PC-9 (cell line): ENCODE measurements at regions of chr13 and their contacts with region 1.

Region 1: GRCh38 chr13:102651892-102652291 is 43.0 kb downstream of the METTL21C start:
- DNase-seq: no peak
- H3K4me3 ChIP-seq: no peak overlapping the region
- H3K27ac ChIP-seq: peak overlapping the region; percentile 16; the same call in 1 of the 2 replicates
- H3K4me1 ChIP-seq: peaks cover 12% of the 10 kb centered on the region
- H3K27me3 ChIP-seq: no peaks in the 10 kb centered on the region
- CTCF ChIP-seq: no peak

Region 2: GRCh38 chr13:101626925-101627555 is 1024.9 kb before region 1 on chr13:
- CTCF ChIA-PET with region 1: no interaction called
- POLR2A ChIA-PET with region 1: no interaction called
- intact Hi-C with region 1: no loop called
- DNase-seq: no peak
- H3K4me3 ChIP-seq: no peak overlapping the region
- H3K27ac ChIP-seq: no peak overlapping the region
- H3K4me1 ChIP-seq: peaks cover 50% of the 10 kb centered on the region
- H3K27me3 ChIP-seq: no peaks in the 10 kb centered on the region
- CTCF ChIP-seq: no peak

Region 3: DNA sequence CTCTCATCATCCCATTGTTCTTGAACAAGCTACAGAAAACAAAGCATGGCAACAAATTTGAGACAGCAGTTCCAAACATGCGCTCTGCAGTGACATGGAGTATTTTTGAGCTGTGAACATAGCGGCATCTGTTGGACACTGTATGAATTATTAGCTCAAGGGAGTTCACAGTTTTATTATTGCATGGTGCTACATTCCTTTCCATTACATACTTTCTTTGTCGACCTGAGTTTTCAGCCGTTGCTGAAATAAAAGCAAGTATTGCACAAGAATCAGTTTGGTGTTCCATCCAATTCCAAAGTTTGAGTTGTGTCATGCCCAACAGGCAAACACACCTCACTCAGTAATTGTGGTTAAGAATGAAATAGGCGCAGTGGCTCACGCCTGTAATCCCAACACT is 73.0 kb after region 1 on chr13:
- CTCF ChIA-PET with region 1: interaction called, 5 read pairs
- POLR2A ChIA-PET with region 1: interaction called, 3 read pairs
- intact Hi-C with region 1: loop called (anchors 5 kb)
- DNase-seq: peak; percentile 12 to 87
- H3K4me3 ChIP-seq: no peak overlapping the region
- H3K27ac ChIP-seq: 0 out of 2 replicates have a peak overlapping the region, but pooled peaks have one; percentile 38
- H3K4me1 ChIP-seq: peaks cover 12% of the 10 kb centered on the region
- H3K27me3 ChIP-seq: no peaks in the 10 kb centered on the region
- CTCF ChIP-seq: peak; percentile 78

Region 4: DNA sequence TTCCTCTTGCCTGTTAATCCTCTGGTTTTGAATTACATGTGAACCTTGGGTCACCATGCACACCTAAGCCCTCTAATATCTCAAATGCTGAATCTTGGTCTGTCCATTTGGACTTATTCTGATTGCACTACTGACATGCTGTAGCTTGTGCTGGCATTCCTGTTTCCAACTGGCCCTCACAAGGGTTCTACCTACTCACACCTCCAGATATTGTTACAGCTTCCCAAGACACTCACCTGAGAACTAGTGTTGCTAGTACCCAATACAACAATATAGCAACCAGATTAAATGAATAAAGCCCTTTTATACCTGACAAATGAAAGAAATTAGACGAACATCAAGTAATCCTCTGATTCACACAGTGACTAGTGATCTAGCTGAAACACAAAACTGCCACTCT is 105.1 kb after region 1 on chr13:
- CTCF ChIA-PET with region 1: no interaction called
- POLR2A ChIA-PET with region 1: no interaction called
- intact Hi-C with region 1: no loop called
- DNase-seq: no peak
- H3K4me3 ChIP-seq: no peak overlapping the region
- H3K27ac ChIP-seq: no peak overlapping the region
- H3K4me1 ChIP-seq: no peaks in the 10 kb centered on the region
- H3K27me3 ChIP-seq: no peaks in the 10 kb centered on the region
- CTCF ChIP-seq: no peak

Region 5: GRCh38 chr13:102856557-102856956 is 204.7 kb after region 1 on chr13:
- CTCF ChIA-PET with region 1: no interaction called
- POLR2A ChIA-PET with region 1: no interaction called
- intact Hi-C with region 1: no loop called
- DNase-seq: no peak
- H3K4me3 ChIP-seq: no peak overlapping the region
- H3K27ac ChIP-seq: no peak overlapping the region
- H3K4me1 ChIP-seq: no peaks in the 10 kb centered on the region
- H3K27me3 ChIP-seq: no peaks in the 10 kb centered on the region
- CTCF ChIP-seq: no peak

Region 6: GRCh38 chr13:103282571-103283450 is 630.9 kb after region 1 on chr13:
- CTCF ChIA-PET with region 1: no interaction called
- POLR2A ChIA-PET with region 1: no interaction called
- intact Hi-C with region 1: no loop called
- DNase-seq: peak; percentile 55 to 98
- H3K4me3 ChIP-seq: peak overlapping the region; percentile 36; the same call in 1 of the 2 replicates
- H3K27ac ChIP-seq: peak overlapping the region; percentile 98
- H3K4me1 ChIP-seq: peaks cover 17% of the 10 kb centered on the region
- H3K27me3 ChIP-seq: no peaks in the 10 kb centered on the region
- CTCF ChIP-seq: no peak